Dorsolateral prefrontal cortex (tissue), 120 donors: ENCODE measurements at regions of chr7 and their contacts with region 1.

Region 1: GRCh38 chr7:67625257-67625737 is 628.7 kb downstream of the TYW1 start:
- DNase-seq: peak; percentile 60 to 83 (median 79)
- H3K4me3 ChIP-seq: peak overlapping the region in 51 of 59 donors; percentile 3 to 62 (median 39)
- H3K27ac ChIP-seq: no peak overlapping the region
- H3K27me3 ChIP-seq: peaks cover 0 to 29% (median 0%) of the 10 kb centered on the region in 45 donors
- CTCF ChIP-seq: peak; percentile 74 to 94 (median 88)

Region 2: DNA sequence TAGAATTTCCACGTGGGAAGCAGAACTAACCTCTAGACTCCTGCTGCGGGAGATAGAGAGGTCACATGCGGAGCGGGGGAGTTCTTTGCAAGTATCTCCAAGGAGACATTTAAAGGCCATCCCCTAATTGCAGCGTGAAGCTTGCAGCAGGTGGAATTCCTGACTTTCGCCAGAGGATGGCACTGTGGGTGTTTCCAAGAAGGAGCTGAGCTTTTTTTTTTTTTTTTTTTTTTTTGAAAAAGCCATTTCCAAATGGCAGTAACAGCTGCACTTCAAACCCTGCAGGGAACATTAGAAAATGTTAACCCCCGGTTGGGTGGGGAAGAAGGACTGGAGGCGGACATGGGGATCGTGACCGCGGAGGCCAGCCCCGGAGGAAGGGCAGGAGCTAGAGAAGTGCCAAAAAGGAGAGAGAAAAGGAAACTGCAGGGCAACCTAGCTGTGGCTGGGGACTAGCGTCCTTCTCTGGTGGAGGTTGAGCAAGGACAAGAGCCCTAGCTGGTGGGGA is 141.0 kb before region 1 on chr7:
- intact Hi-C with region 1: loop called in 1 of 2 experiments (anchors 10 kb)
- DNase-seq: peak in 8 of 10 donors; percentile 36 to 66 (median 55)
- H3K4me3 ChIP-seq: peak overlapping the region in 56 of 59 donors; percentile 3 to 69 (median 42)
- H3K27ac ChIP-seq: peak overlapping the region in 1 of 59 donors; percentile 36
- H3K27me3 ChIP-seq: peaks cover 0 to 5% (median 0%) of the 10 kb centered on the region in 45 donors
- CTCF ChIP-seq: peak; percentile 44 to 87 (median 74)

Region 3: GRCh38 chr7:67882843-67883242 is 257.5 kb after region 1 on chr7:
- intact Hi-C with region 1: no loop called
- DNase-seq: no peak
- H3K4me3 ChIP-seq: no peak overlapping the region
- H3K27ac ChIP-seq: no peak overlapping the region
- H3K27me3 ChIP-seq: peaks cover 0 to 6% (median 0%) of the 10 kb centered on the region in 45 donors
- CTCF ChIP-seq: no peak